Naive thymus-derived CD4-positive, alpha-beta T cell (primary cell): ENCODE measurements at regions of chr2 and their contacts with region 1.

Region 1: GRCh38 chr2:122885436-122885835 is 1130.0 kb downstream of the TSN start:
- DNase-seq: no peak
- ATAC-seq: no peak
- H3K4me3 ChIP-seq: no peak overlapping the region
- H3K4me3 Mint-ChIP-seq: no peak overlapping the region
- H3K27ac ChIP-seq: no peak overlapping the region
- H3K27ac Mint-ChIP-seq: no peak overlapping the region
- H3K4me1 ChIP-seq: no peaks in the 10 kb centered on the region
- H3K4me1 Mint-ChIP-seq: no peaks in the 10 kb centered on the region
- H3K27me3 ChIP-seq: no peaks in the 10 kb centered on the region
- H3K27me3 Mint-ChIP-seq: no peaks in the 10 kb centered on the region

Region 2: GRCh38 chr2:122469147-122469546 is 416.3 kb before region 1 on chr2:
- CTCF ChIA-PET with region 1: no interaction called
- POLR2A ChIA-PET with region 1: no interaction called
- intact Hi-C with region 1: no loop called
- DNase-seq: no peak
- ATAC-seq: no peak
- H3K4me3 ChIP-seq: no peak overlapping the region
- H3K4me3 Mint-ChIP-seq: no peak overlapping the region
- H3K27ac ChIP-seq: no peak overlapping the region
- H3K27ac Mint-ChIP-seq: no peak overlapping the region
- H3K4me1 ChIP-seq: no peaks in the 10 kb centered on the region
- H3K4me1 Mint-ChIP-seq: no peaks in the 10 kb centered on the region
- H3K27me3 ChIP-seq: no peaks in the 10 kb centered on the region
- H3K27me3 Mint-ChIP-seq: no peaks in the 10 kb centered on the region

Region 3: DNA sequence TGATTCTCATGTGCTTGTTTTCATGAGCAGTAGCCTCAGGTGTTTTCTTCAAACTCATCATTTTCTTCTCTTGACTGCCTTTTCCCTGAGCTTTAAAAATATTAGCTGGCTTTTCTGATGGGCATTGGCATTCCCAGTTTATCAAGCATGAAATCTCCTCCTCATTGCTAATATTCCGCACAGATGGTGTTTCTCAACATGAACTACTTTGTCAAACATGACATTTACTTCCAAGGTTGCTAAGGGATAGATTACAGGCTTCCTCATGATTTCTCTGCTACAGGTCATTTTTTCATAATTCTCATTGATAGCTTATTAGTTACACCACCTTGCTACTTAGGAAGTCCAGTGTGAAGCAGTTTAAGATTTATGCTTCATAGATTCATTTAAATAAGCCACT is 22.7 kb after region 1 on chr2:
- CTCF ChIA-PET with region 1: no interaction called
- POLR2A ChIA-PET with region 1: no interaction called
- intact Hi-C with region 1: loop called in 1 of 2 experiments (anchors 1 kb)
- DNase-seq: no peak
- ATAC-seq: no peak
- H3K4me3 ChIP-seq: no peak overlapping the region
- H3K4me3 Mint-ChIP-seq: no peak overlapping the region
- H3K27ac ChIP-seq: no peak overlapping the region
- H3K27ac Mint-ChIP-seq: no peak overlapping the region
- H3K4me1 ChIP-seq: no peaks in the 10 kb centered on the region
- H3K4me1 Mint-ChIP-seq: no peaks in the 10 kb centered on the region
- H3K27me3 ChIP-seq: no peaks in the 10 kb centered on the region
- H3K27me3 Mint-ChIP-seq: no peaks in the 10 kb centered on the region

Region 4: DNA sequence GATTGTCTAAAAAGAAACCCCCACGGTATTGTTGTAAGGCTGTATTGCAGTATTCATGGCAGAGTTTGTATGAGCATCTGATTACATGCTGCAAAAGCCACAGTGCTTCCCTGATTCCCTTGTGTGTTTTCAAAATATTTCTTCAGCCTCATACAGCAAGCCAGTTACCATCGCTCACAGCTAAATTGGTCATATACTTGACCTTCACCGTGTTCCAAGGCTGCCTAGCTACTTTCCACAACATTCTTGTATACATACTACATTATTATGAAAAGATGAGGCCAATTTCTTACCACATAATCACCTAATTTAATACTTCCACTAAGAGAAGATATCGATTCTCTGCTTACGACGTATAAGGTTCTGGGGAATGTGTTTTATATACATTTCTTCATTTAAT is 563.4 kb after region 1 on chr2:
- CTCF ChIA-PET with region 1: no interaction called
- POLR2A ChIA-PET with region 1: no interaction called
- intact Hi-C with region 1: no loop called
- DNase-seq: no peak
- ATAC-seq: no peak
- H3K4me3 ChIP-seq: no peak overlapping the region
- H3K4me3 Mint-ChIP-seq: no peak overlapping the region
- H3K27ac ChIP-seq: no peak overlapping the region
- H3K27ac Mint-ChIP-seq: no peak overlapping the region
- H3K4me1 ChIP-seq: no peaks in the 10 kb centered on the region
- H3K4me1 Mint-ChIP-seq: no peaks in the 10 kb centered on the region
- H3K27me3 ChIP-seq: no peaks in the 10 kb centered on the region
- H3K27me3 Mint-ChIP-seq: no peaks in the 10 kb centered on the region